ENCODE measurements at regions of chr1 and their contacts with region 1.

Region 1: DNA sequence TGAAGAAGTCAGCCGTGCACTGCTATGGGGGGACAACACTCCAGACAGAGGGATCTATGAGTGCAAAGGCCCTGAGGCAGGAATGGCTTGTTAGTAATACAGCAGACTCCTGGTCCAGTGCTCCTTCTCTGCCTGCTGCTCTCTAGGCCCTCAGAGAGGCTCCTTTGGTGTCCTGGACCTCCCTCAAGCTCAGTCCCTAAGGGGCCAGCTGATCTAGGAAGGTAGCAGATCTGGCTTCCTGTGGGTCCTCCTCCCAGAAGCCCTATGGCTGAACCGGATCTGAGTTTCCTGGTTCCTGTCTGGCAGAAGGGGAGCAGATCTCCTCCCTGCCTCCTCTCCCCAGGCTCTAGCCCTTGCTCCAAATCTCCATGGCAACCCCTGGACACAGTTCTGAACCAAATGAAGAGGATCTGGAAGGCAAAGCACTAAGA is at the start of gene LDLRAD2:
- DNase-seq: no peak
- ATAC-seq: peak; percentile 8 to 13
- H3K4me3 ChIP-seq: no peak within 1 kb of the TSS
- H3K27ac ChIP-seq: no peak within 1 kb of the TSS
- H3K4me1 ChIP-seq: no peaks in the 10 kb centered on the region
- H3K27me3 ChIP-seq: no peaks in the 10 kb centered on the region
- total RNA-seq, gene LDLRAD2: 0.06 to 0.23 TPM in 2 of 4 donors, not detected in the others

Region 2: GRCh38 chr1:21839337-21840037 is 27.6 kb after region 1 on chr1:
- intact Hi-C with region 1: loop called in 1 of 4 experiments (anchors 2 kb)
- DNase-seq: peak in 1 of 3 donors; percentile 55
- ATAC-seq: peak in 1 of 2 donors; percentile 3
- H3K4me3 ChIP-seq: no peak overlapping the region
- H3K27ac ChIP-seq: no peak overlapping the region
- H3K4me1 ChIP-seq: no peaks in the 10 kb centered on the region
- H3K27me3 ChIP-seq: no peaks in the 10 kb centered on the region

Measured in right cardiac atrium (tissue), 5 donors.